Gastrocnemius medialis (tissue), 4 donors: ENCODE measurements at regions of chr15 and their contacts with region 1.

Region 1: DNA sequence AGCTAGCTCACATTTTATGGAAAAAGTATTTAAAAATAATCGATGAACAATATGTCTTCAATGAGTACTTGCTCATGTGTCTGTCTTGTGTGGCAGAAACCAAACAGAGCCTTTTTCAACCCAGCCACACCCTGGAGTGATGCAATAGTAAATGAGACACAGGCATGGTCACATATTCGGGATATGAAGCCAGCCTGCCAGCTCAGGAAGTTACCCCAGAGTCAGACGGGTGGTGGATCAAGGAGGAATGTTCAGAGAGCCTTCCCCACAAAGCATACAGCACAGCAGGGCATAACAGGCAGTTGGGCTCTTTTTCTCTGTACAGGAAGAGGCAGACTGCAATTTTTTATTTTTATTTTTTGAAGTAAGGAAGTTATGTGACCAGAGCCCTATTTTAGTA is 27.3 kb downstream of the LARP6 start:
- DNase-seq: peak; percentile 44 to 67
- ATAC-seq: peak; percentile 50 to 60
- H3K4me3 ChIP-seq: no peak overlapping the region
- H3K27ac ChIP-seq: peak overlapping the region; percentile 36 to 52 (median 50)
- H3K4me1 ChIP-seq: peaks cover 7 to 28% of the 10 kb centered on the region in 2 donors
- H3K27me3 ChIP-seq: no peaks in the 10 kb centered on the region
- CTCF ChIP-seq: no peak
- POLR2A ChIP-seq: no peak

Region 2: DNA sequence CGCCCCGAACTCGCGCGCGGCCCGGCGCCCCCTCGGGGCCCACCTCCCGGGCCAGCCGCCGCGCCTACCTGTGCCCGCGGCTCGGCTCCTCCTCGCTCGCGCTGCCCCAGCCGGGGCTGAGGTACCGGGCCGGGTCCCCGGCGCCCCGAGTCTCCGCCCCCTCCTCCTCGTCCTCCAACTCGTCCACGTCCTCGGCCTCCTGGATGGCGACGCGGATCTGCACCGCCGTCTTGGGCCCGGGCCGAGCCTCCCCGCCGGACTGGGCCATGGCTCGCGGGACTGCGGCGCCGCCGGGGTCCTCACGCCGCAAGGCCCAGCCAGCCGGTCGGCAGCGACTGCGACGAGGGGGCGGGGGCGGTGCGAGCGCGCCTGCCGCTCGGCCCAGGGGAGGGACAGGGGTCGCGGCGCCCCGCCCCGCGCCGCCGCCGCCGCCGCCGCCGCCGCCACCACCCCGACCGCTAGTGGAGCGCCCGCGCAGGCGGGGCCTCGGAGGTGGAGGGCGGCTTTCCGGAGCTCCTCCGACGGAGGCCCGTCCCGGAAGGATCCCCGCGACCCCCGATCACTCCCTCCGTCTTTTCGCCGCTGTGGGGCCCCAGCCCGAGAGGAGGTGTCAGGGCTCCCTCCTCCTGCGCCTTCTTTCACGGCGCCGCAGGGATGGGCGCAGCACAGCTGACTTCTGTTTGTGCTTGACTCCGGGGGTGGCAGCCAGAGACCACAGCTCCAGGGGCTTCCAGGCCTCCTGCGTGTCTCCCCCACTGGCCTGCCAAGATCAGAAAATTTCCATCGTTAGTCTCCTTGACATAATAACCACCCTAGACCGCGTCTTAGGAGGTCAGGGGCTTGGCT is 27.4 kb after region 1 on chr15 and contains the start of gene LARP6:
- in situ Hi-C with region 1: no loop called
- intact Hi-C with region 1: loop called (anchors 1 kb)
- DNase-seq: peak in 1 of 2 donors; percentile 34
- ATAC-seq: peak; percentile 55 to 63
- H3K4me3 ChIP-seq: peak within 1 kb of the TSS; percentile 55 to 79 (median 68)
- H3K27ac ChIP-seq: peak within 1 kb of the TSS; percentile 68 to 84 (median 77)
- H3K4me1 ChIP-seq: peaks cover 0 to 15% of the 10 kb centered on the region in 2 donors
- H3K27me3 ChIP-seq: no peaks in the 10 kb centered on the region
- CTCF ChIP-seq: peak in 1 of 5 experiments; percentile 9
- POLR2A ChIP-seq: peak; percentile 53 to 69
- total RNA-seq, gene LARP6: 10.0 to 20.6 (median 13.9) TPM

Region 3: DNA sequence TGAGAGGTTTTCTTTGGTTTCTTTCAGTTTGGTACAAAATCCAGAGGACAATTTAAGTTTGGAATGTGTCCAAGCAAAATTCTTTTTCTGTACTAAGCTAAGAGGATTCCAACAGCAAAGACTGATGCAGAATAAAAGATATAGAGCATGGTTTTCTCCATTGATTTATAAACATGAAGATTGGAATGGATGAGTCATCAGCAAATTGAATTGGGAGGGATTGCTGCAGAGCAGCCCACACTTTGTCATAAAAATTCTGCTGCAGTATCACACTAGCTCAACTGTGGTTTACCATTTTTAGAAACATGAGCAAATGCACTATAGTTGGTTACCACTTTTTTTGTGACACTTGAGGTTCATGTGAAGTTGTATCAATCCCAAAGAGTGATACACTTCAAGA is 43.4 kb after region 1 on chr15:
- in situ Hi-C with region 1: loop called in 3 of 4 experiments (anchors 5 to 10 kb)
- intact Hi-C with region 1: loop called (anchors 1 kb)
- DNase-seq: no peak
- ATAC-seq: no peak
- H3K4me3 ChIP-seq: no peak overlapping the region
- H3K27ac ChIP-seq: no peak overlapping the region
- H3K4me1 ChIP-seq: peaks cover 0 to 24% of the 10 kb centered on the region in 2 donors
- H3K27me3 ChIP-seq: no peaks in the 10 kb centered on the region
- CTCF ChIP-seq: no peak
- POLR2A ChIP-seq: no peak

Region 4: GRCh38 chr15:70875001-70875782 is 48.6 kb after region 1 on chr15:
- in situ Hi-C with region 1: loop called in 3 of 4 experiments (anchors 5 to 10 kb)
- intact Hi-C with region 1: loop called (anchors 1 kb)
- DNase-seq: no peak
- ATAC-seq: no peak
- H3K4me3 ChIP-seq: no peak overlapping the region
- H3K27ac ChIP-seq: no peak overlapping the region
- H3K4me1 ChIP-seq: peaks cover 0 to 5% of the 10 kb centered on the region in 2 donors
- H3K27me3 ChIP-seq: no peaks in the 10 kb centered on the region
- CTCF ChIP-seq: peak in 3 of 5 experiments; percentile 9 to 49 (median 44)
- POLR2A ChIP-seq: no peak

Region 5: GRCh38 chr15:70892002-70892914 is 65.6 kb after region 1 on chr15 and contains the starts of genes LRRC49 and THAP10:
- in situ Hi-C with region 1: no loop called
- intact Hi-C with region 1: loop called (anchors 5 kb)
- DNase-seq: peak; percentile 68 to 82
- ATAC-seq: peak; percentile 95 to 96
- H3K4me3 ChIP-seq: peak within 1 kb of the TSS; percentile 72 to 88 (median 84)
- H3K27ac ChIP-seq: peak within 1 kb of the TSS; percentile 64 to 72 (median 67)
- H3K4me1 ChIP-seq: peaks cover 6 to 17% of the 10 kb centered on the region in 2 donors
- H3K27me3 ChIP-seq: no peaks in the 10 kb centered on the region
- CTCF ChIP-seq: no peak
- POLR2A ChIP-seq: no peak
- total RNA-seq, gene LRRC49: 0.51 to 5.0 (median 2.8) TPM
- total RNA-seq, gene THAP10: 0.46 to 2.3 (median 1.1) TPM

Region 6: DNA sequence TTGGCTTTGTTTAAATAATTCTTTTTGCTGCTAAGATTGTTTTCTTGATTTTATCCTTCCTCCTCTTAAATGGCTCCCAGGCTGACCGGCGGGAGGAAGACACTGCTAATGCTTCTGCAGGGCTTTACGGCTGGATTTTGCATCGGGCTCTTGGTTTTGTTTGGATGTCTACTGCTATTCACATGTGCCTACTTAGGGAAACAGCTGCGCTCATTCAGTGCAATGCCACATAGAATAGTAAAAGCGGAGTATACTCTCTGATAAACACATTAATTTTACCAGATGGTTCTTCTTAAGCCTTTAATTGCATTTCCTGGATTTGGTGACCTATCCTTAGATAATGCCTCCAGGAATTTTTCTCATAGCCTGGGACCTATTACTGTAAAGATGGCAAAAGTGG is 435.3 kb after region 1 on chr15:
- in situ Hi-C with region 1: no loop called
- intact Hi-C with region 1: no loop called
- DNase-seq: no peak
- ATAC-seq: no peak
- H3K4me3 ChIP-seq: no peak overlapping the region
- H3K27ac ChIP-seq: no peak overlapping the region
- H3K4me1 ChIP-seq: no peaks in the 10 kb centered on the region
- H3K27me3 ChIP-seq: no peaks in the 10 kb centered on the region
- CTCF ChIP-seq: no peak
- POLR2A ChIP-seq: no peak